ENCODE measurements at regions of chr15 and their contacts with region 1.

Region 1: GRCh38 chr15:90545095-90545494 is 15.4 kb downstream of the CRTC3 start:
- DNase-seq: no peak
- ATAC-seq: peak in 1 of 4 experiments; percentile 13
- H3K4me3 ChIP-seq: no peak overlapping the region
- H3K4me3 Mint-ChIP-seq: no peak overlapping the region
- H3K27ac ChIP-seq: no peak overlapping the region
- H3K27ac Mint-ChIP-seq: peak overlapping the region; percentile 60 to 70
- H3K4me1 ChIP-seq: peaks cover 16 to 29% of the 10 kb centered on the region in 2 experiments
- H3K4me1 Mint-ChIP-seq: peaks cover 68 to 72% (median 69%) of the 10 kb centered on the region in 3 donors
- H3K27me3 ChIP-seq: no peaks in the 10 kb centered on the region
- H3K27me3 Mint-ChIP-seq: no peaks in the 10 kb centered on the region

Region 2: GRCh38 chr15:90184786-90185569 is 360.1 kb before region 1 on chr15:
- CTCF ChIA-PET with region 1: no interaction called
- POLR2A ChIA-PET with region 1: no interaction called
- DNase-seq: peak in 34 of 35 experiments; percentile 21 to 67 (median 48)
- ATAC-seq: peak; percentile 83 to 89 (median 85)
- H3K4me3 ChIP-seq: peak overlapping the region; percentile 48 to 51
- H3K4me3 Mint-ChIP-seq: peak overlapping the region; percentile 77 to 84 (median 77)
- H3K27ac ChIP-seq: no peak overlapping the region
- H3K27ac Mint-ChIP-seq: peak overlapping the region; percentile 23 to 33
- H3K4me1 ChIP-seq: peaks cover 6 to 21% of the 10 kb centered on the region in 2 experiments
- H3K4me1 Mint-ChIP-seq: peaks cover 12 to 19% (median 14%) of the 10 kb centered on the region in 3 donors
- H3K27me3 ChIP-seq: no peaks in the 10 kb centered on the region
- H3K27me3 Mint-ChIP-seq: no peaks in the 10 kb centered on the region

Region 3: DNA sequence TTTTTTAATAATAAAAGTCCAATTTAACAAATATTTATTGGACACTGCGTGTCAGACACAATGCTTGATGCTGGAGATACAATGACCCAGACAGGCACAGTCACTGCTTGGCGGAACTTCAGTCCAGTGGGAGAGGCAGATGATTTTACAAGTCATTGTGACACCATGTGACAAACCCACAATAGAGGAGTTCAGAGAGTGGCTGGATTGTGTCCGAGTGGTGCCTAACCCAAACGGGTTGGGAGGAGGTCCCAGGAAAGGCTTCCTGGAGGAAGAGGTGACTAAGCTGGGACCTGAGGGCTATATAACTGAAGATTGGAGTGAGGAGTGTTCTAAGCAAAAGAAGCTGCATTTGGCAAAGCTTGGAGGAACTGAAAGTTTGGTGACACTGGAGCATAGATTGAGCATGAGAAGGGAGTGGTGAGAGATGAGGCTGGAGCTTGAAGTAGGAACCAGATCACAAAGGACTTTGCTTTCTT is 26.0 kb after region 1 on chr15:
- CTCF ChIA-PET with region 1: no interaction called
- POLR2A ChIA-PET with region 1: no interaction called
- DNase-seq: no peak
- ATAC-seq: no peak
- H3K4me3 ChIP-seq: peak overlapping the region in 1 of 2 donors; percentile 23
- H3K4me3 Mint-ChIP-seq: peak overlapping the region in 1 of 3 donors; percentile 49
- H3K27ac ChIP-seq: peak overlapping the region; percentile 1
- H3K27ac Mint-ChIP-seq: peak overlapping the region; percentile 53 to 91
- H3K4me1 ChIP-seq: peaks cover 61 to 69% of the 10 kb centered on the region in 2 experiments
- H3K4me1 Mint-ChIP-seq: peaks cover 89 to 93% (median 90%) of the 10 kb centered on the region in 3 donors
- H3K27me3 ChIP-seq: no peaks in the 10 kb centered on the region
- H3K27me3 Mint-ChIP-seq: no peaks in the 10 kb centered on the region

Region 4: GRCh38 chr15:90902040-90902839 is 357.1 kb after region 1 on chr15:
- CTCF ChIA-PET with region 1: no interaction called
- POLR2A ChIA-PET with region 1: interaction called in 1 of 2 experiments, 10 read pairs
- DNase-seq: peak; percentile 31 to 83 (median 56)
- ATAC-seq: peak; percentile 77 to 80 (median 77)
- H3K4me3 ChIP-seq: peak overlapping the region; percentile 78 to 86
- H3K4me3 Mint-ChIP-seq: peak overlapping the region; percentile 82 to 88 (median 82)
- H3K27ac ChIP-seq: peak overlapping the region; percentile 77
- H3K27ac Mint-ChIP-seq: peak overlapping the region; percentile 90
- H3K4me1 ChIP-seq: peaks cover 3 to 19% of the 10 kb centered on the region in 2 experiments
- H3K4me1 Mint-ChIP-seq: peaks cover 24 to 27% (median 27%) of the 10 kb centered on the region in 3 donors
- H3K27me3 ChIP-seq: no peaks in the 10 kb centered on the region
- H3K27me3 Mint-ChIP-seq: no peaks in the 10 kb centered on the region

Measured in T-cell (primary cell).